Activated CD4-positive, alpha-beta memory T cell treated with anti-CD3 and anti-CD28 coated beads, Interleukin-2, amount 10 ng/mL, durations not matched to agents 7 days and 5 days (primary cell): ENCODE measurements at regions of chr10 and their contacts with region 1.

Region 1: DNA sequence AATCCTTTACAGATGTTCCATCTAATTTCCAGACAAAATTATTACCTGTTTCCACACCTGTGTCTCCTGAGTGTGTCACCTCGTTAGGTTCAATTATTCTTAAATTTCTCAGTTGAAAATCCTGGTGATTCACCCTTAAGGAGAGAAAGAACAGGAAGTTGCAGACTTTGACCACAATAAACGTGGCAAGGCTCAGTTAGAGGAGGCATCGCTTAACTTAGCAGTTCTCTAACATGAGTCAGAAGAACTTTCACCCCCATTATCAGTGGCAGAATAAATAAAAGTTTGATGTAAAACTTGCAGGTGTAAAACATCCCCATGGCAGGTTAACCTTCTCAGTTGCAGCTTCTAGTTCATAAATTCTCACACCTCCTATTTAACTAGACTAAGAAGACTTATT is 8.3 kb downstream of the XPNPEP1 start:
- DNase-seq: peak; percentile 51
- H3K4me3 Mint-ChIP-seq: no peak overlapping the region
- H3K27ac Mint-ChIP-seq: peak overlapping the region; percentile 74
- H3K4me1 Mint-ChIP-seq: peaks cover 77% of the 10 kb centered on the region
- H3K27me3 Mint-ChIP-seq: no peaks in the 10 kb centered on the region

Region 2: GRCh38 chr10:109773288-109774120 is 141.5 kb before region 1 on chr10:
- CTCF ChIA-PET with region 1: no interaction called
- POLR2A ChIA-PET with region 1: no interaction called
- DNase-seq: no peak
- H3K4me3 Mint-ChIP-seq: no peak overlapping the region
- H3K27ac Mint-ChIP-seq: no peak overlapping the region
- H3K4me1 Mint-ChIP-seq: no peaks in the 10 kb centered on the region
- H3K27me3 Mint-ChIP-seq: no peaks in the 10 kb centered on the region

Region 3: DNA sequence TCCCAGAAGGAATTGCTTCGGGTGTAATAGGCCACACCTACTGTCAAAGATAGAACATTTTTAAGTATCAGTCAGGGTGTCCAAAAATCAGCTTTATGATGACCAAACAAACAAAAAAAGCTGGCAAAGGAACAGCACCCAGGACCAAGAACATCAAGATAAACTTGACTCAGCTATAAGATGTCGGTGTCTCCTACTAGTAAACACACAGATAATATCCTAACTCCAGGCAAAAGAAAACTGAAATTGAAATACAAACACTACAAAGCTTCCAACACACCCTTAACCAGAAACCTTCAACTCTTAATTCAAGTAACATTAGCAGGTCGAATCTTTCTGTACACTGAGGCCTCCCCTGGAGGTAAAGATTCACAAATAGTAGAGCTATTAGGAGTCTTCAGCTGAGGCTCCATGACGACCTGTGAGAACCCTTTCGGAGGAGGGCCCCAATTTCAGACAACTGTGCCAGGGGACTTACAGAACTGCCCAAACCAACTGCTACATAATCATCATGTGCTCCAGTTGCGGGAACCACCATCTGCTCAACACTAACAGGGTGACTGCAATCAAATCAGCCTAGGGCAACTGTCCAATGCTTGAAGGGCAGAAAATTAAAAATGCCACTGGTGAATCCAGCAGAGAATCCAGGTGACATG is 11.9 kb before region 1 on chr10:
- CTCF ChIA-PET with region 1: interaction called, 4 read pairs
- POLR2A ChIA-PET with region 1: interaction called, 32 read pairs
- DNase-seq: peak; percentile 38
- H3K4me3 Mint-ChIP-seq: peak overlapping the region; percentile 61
- H3K27ac Mint-ChIP-seq: peak overlapping the region; percentile 91
- H3K4me1 Mint-ChIP-seq: peaks cover 54% of the 10 kb centered on the region
- H3K27me3 Mint-ChIP-seq: no peaks in the 10 kb centered on the region

Region 4: DNA sequence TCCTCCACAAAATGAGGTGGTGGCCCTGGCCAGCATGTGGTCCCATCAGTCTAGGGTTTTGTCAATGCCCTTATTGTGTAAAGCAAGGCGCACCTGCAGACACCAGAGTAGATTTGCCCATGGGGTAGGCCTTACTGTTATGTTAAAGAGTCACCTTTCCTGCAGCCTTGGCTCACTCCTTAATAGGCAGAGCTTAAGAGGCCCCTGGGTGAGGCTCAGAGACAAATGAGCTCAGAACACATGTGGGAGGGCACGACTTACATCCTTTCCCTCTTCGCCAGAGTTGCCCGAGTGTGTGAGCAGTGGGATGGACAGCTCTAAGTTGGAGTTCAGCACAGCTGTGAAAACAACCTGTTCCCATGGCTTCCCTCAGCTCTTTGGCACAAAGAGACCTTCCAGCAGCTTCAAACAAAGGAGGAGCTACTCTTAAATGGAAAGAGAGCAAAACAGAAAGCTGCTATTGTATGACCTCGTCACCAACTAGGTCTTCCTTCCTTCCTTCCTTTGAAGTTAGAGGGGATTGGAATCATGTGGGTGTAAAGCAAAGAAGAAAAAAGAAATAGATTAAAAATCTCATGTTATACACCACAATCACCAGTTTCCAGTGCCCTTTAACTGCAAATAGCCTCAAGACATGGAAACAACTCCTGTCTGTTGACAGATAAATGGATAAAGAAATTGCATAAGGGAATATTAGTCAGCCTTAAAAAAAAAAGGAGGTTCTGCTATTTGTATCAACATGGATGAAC is 20.2 kb after region 1 on chr10:
- CTCF ChIA-PET with region 1: interaction called, 5 read pairs
- POLR2A ChIA-PET with region 1: interaction called, 17 read pairs
- DNase-seq: no peak
- H3K4me3 Mint-ChIP-seq: peak overlapping the region; percentile 62
- H3K27ac Mint-ChIP-seq: peak overlapping the region; percentile 83
- H3K4me1 Mint-ChIP-seq: peaks cover 31% of the 10 kb centered on the region
- H3K27me3 Mint-ChIP-seq: no peaks in the 10 kb centered on the region